ENCODE measurements at regions of chr10 and their contacts with region 1.

Region 1: DNA sequence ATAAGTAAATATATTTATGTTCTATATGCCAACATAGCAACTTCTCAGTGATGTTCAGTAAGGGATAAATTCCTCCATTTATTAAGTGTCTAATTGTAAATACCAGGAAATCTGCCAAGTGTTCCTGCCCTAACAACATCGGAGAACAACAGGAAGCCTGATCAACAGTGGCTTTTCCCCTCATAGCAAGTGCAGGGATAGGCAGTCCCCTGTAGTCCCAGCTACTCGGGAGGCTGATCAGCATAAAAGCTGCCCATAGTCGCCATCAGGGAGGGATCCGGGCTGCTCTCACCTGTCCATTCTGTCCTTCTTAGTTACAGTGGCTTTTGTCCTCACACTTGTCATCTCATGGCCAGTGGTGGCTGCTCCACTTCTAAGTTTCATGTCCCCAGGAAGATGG is 141.3 kb downstream of the IDE start:
- DNase-seq: no peak

Region 2: GRCh38 chr10:92087750-92088395 is 344.7 kb before region 1 on chr10:
- intact Hi-C with region 1: loop called (anchors 5 kb)
- DNase-seq: no peak

Region 3: DNA sequence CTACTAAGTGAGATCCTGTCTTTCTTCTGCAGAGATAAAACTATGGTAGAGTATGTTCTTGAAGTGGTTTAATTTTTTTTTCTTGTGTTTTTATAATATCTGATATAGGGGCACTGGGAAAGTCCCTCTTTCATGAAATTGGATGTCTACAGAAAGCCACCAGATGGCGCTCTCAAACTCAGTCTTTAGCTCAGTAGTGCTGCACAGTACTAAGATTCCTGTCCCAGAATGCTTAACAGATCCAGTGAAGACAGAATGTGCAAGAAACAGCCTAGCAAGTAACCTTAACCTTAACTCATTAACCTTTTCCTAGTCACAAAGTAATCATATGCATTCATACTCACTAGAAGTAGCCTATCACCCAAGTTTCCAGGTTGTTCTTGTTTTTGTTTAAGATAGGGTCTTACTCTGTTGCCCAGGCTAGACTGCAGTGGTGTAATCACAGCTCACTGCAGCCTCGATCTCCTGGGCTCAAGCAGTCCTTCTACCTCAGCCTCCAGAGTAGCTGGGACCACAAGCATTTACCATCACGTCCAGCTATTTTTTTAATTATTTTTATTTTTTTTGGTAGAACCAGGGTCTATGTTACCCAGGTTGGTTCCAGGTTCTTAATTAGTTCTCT is 84.5 kb after region 1 on chr10:
- intact Hi-C with region 1: no loop called
- DNase-seq: no peak

Measured in posterior vena cava (tissue), 2 donors.